ENCODE measurements at regions of chr10 and their contacts with region 1.

Region 1: DNA sequence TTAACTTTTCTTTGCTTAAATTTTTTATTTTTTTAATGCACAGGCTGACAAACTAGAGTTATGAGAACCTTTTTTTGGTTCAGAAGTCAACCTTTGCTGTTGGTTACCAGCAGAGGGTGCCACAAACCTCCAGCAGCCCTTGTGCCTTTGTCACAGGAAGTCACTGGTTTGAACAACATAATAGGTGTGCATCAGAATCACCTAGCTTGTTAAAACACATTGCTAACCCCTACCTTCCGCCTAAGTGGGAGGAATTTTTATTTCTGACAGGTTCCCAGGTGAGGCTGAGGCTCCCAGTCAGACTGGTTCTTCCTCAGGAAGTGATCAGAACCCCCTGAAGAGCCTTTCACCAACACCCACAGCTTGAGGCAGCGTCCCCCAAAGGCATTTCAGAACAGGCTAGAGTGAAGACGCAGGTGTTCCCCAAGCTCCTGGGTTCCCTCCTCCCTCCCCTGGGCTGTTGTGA is 22.6 kb upstream of the VDAC2 start:
- DNase-seq: peak; percentile 46 to 90 (median 73)
- ATAC-seq: peak; percentile 98
- H3K4me3 ChIP-seq: no peak overlapping the region
- H3K4me3 Mint-ChIP-seq: peak overlapping the region; percentile 39
- H3K27ac ChIP-seq: peak overlapping the region; percentile 48 to 79
- H3K27ac Mint-ChIP-seq: peak overlapping the region; percentile 97
- H3K4me1 ChIP-seq: peaks cover 8% of the 10 kb centered on the region
- H3K4me1 Mint-ChIP-seq: peaks cover 7% of the 10 kb centered on the region
- H3K27me3 ChIP-seq: no peaks in the 10 kb centered on the region
- H3K27me3 Mint-ChIP-seq: no peaks in the 10 kb centered on the region
- CTCF ChIP-seq: peak; percentile 87

Region 2: GRCh38 chr10:75176046-75176445 is 11.9 kb before region 1 on chr10:
- CTCF ChIA-PET with region 1: interaction called, 13 read pairs
- POLR2A ChIA-PET with region 1: interaction called, 3 read pairs
- intact Hi-C with region 1: no loop called
- DNase-seq: peak in 4 of 9 experiments; percentile 3 to 39 (median 15)
- ATAC-seq: no peak
- H3K4me3 ChIP-seq: no peak overlapping the region
- H3K4me3 Mint-ChIP-seq: no peak overlapping the region
- H3K27ac ChIP-seq: no peak overlapping the region
- H3K27ac Mint-ChIP-seq: no peak overlapping the region
- H3K4me1 ChIP-seq: no peaks in the 10 kb centered on the region
- H3K4me1 Mint-ChIP-seq: peaks cover 12% of the 10 kb centered on the region
- H3K27me3 ChIP-seq: no peaks in the 10 kb centered on the region
- H3K27me3 Mint-ChIP-seq: no peaks in the 10 kb centered on the region
- CTCF ChIP-seq: no peak

Region 3: GRCh38 chr10:75202321-75203045 is 14.5 kb after region 1 on chr10:
- CTCF ChIA-PET with region 1: interaction called, 34 read pairs
- POLR2A ChIA-PET with region 1: interaction called, 3 read pairs
- intact Hi-C with region 1: no loop called
- DNase-seq: no peak
- ATAC-seq: no peak
- H3K4me3 ChIP-seq: no peak overlapping the region
- H3K4me3 Mint-ChIP-seq: no peak overlapping the region
- H3K27ac ChIP-seq: no peak overlapping the region
- H3K27ac Mint-ChIP-seq: no peak overlapping the region
- H3K4me1 ChIP-seq: no peaks in the 10 kb centered on the region
- H3K4me1 Mint-ChIP-seq: no peaks in the 10 kb centered on the region
- H3K27me3 ChIP-seq: no peaks in the 10 kb centered on the region
- H3K27me3 Mint-ChIP-seq: no peaks in the 10 kb centered on the region
- CTCF ChIP-seq: no peak

Region 4: DNA sequence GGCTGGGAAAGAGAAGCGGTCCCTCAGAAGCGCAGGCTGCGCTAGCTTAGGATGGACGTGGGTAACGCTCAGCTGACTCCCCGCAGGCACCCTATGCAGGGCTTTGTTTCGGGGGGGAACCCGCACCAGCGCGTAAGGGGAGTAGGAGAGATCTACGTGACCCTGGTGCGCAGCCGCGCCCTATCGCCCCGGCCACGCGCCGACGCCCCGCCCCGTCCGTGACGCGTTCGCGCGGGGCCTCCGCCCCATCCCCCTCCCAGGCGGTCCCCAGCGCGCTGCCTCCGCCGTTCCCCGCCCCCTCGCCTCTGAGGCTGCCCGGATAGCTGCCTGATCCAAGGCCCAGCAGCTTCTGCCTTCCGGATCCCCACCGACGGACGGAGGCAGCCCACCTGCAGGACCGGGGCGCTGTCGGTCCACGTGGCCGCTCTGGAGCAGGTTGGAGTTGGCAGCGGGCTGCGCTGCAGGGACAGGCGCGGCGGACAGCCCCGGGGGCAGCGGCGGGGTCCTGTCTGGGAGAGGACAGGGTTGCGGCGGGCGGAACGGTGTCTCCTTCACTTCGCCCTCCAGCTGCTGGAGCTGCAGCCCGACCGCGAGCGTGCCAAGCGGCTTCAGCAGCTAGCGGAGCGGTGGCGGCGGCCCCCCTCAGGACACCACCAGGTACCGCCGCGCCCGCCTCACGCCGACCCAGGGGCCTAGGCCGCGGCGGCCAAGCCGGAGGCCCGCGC is 22.4 kb after region 1 on chr10 and contains the start of gene VDAC2:
- CTCF ChIA-PET with region 1: interaction called, 32 read pairs
- POLR2A ChIA-PET with region 1: interaction called, 26 read pairs
- intact Hi-C with region 1: loop called (anchors 1 kb)
- DNase-seq: peak; percentile 93 to 99 (median 96)
- ATAC-seq: peak; percentile 89
- H3K4me3 ChIP-seq: peak within 1 kb of the TSS; percentile 90 to 93
- H3K4me3 Mint-ChIP-seq: peak within 1 kb of the TSS; percentile 97
- H3K27ac ChIP-seq: peak within 1 kb of the TSS; percentile 99 to 100
- H3K27ac Mint-ChIP-seq: peak within 1 kb of the TSS; percentile 100
- H3K4me1 ChIP-seq: peaks cover 28% of the 10 kb centered on the region
- H3K4me1 Mint-ChIP-seq: peaks cover 26% of the 10 kb centered on the region
- H3K27me3 ChIP-seq: no peaks in the 10 kb centered on the region
- H3K27me3 Mint-ChIP-seq: no peaks in the 10 kb centered on the region
- CTCF ChIP-seq: no peak
- total RNA-seq, gene VDAC2: 184 to 187 TPM

Region 5: DNA sequence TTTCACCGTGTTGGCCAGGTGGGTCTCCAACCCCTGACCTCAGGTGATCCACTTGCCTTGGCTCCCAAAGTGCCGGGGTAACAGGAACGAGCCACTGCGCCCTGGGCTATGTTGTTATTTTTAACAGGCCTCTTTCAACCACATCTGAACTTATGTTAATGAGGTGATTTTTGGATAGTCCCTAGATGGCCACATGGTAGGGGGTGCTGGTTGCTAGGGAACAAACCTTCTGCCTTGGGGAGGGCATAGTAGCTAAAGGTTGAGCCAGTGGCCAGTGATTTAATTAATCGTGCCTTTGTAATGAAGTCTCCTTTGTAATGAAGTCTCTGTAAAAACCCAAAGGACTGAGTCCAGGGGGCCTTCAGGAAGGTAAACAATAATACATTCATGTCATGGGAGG is 38.7 kb after region 1 on chr10:
- CTCF ChIA-PET with region 1: interaction called, 229 read pairs
- POLR2A ChIA-PET with region 1: interaction called, 7 read pairs
- intact Hi-C with region 1: loop called (anchors 1 kb)
- DNase-seq: no peak
- ATAC-seq: no peak
- H3K4me3 ChIP-seq: no peak overlapping the region
- H3K4me3 Mint-ChIP-seq: no peak overlapping the region
- H3K27ac ChIP-seq: no peak overlapping the region
- H3K27ac Mint-ChIP-seq: peak overlapping the region; percentile 85
- H3K4me1 ChIP-seq: peaks cover 31% of the 10 kb centered on the region
- H3K4me1 Mint-ChIP-seq: peaks cover 67% of the 10 kb centered on the region
- H3K27me3 ChIP-seq: no peaks in the 10 kb centered on the region
- H3K27me3 Mint-ChIP-seq: no peaks in the 10 kb centered on the region
- CTCF ChIP-seq: no peak

Measured in CD8-positive, alpha-beta T cell (primary cell).